AG04449 (cell line): ENCODE measurements at regions of chr19 and their contacts with region 1.

Region 1: GRCh38 chr19:5967994-5968430 is 9.9 kb downstream of the RANBP3 start:
- DNase-seq: no peak
- H3K4me3 ChIP-seq: no peak overlapping the region
- CTCF ChIP-seq: peak; percentile 85

Region 2: GRCh38 chr19:5880604-5881078 is 87.4 kb before region 1 on chr19:
- CTCF ChIA-PET with region 1: no interaction called
- POLR2A ChIA-PET with region 1: no interaction called
- DNase-seq: peak; percentile 54
- H3K4me3 ChIP-seq: no peak overlapping the region
- CTCF ChIP-seq: no peak

Region 3: GRCh38 chr19:5934774-5935472 is 33.1 kb before region 1 on chr19:
- CTCF ChIA-PET with region 1: interaction called, 57 read pairs
- POLR2A ChIA-PET with region 1: no interaction called
- DNase-seq: no peak
- H3K4me3 ChIP-seq: no peak overlapping the region
- CTCF ChIP-seq: no peak

Region 4: GRCh38 chr19:5947435-5947834 is 20.6 kb before region 1 on chr19:
- CTCF ChIA-PET with region 1: interaction called, 151 read pairs
- POLR2A ChIA-PET with region 1: no interaction called
- DNase-seq: no peak
- H3K4me3 ChIP-seq: no peak overlapping the region
- CTCF ChIP-seq: no peak

Region 5: GRCh38 chr19:5953680-5954213 is 14.3 kb before region 1 on chr19:
- CTCF ChIA-PET with region 1: interaction called, 151 read pairs
- POLR2A ChIA-PET with region 1: no interaction called
- DNase-seq: no peak
- H3K4me3 ChIP-seq: no peak overlapping the region
- CTCF ChIP-seq: no peak

Region 6: DNA sequence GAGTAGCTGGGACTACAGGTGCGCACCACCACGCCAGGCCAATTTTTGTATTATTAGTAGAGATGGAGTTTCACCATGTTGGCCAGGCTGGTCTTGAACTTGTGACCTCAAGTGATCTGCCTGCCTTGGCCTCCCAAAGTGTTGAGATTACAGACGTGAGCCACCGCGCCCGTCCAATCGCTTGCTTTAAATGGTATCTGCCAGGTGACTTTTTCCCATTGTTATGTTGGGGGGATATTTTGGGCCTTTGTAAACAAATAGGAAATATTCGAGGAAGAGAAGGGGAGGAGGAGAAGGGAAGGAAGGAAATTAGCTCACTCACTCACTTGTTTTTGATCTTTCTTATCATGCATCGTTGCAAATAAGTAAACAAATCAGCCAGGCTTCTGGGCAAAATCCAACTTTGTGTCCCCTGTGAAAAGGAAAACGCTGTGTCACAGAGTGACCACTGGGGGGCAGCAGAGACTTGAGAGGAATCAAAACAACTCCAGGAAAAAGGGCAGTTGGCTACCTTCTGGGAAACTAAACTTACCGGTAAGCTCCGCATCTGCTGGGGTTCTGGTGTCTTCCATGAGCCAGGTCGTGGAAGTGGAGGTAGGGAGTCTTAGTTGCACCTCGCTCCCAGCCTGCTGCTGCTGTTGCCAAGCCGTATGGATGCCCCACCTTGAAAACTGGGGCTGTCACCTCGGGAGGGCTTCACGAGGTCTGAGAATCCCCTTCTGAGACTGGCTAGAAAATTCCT is 19.2 kb after region 1 on chr19:
- CTCF ChIA-PET with region 1: interaction called, 91 read pairs
- POLR2A ChIA-PET with region 1: no interaction called
- DNase-seq: peak; percentile 34
- H3K4me3 ChIP-seq: peak overlapping the region; percentile 42
- CTCF ChIP-seq: peak; percentile 72